ENCODE measurements at regions of chr11 and their contacts with region 1.

Region 1: DNA sequence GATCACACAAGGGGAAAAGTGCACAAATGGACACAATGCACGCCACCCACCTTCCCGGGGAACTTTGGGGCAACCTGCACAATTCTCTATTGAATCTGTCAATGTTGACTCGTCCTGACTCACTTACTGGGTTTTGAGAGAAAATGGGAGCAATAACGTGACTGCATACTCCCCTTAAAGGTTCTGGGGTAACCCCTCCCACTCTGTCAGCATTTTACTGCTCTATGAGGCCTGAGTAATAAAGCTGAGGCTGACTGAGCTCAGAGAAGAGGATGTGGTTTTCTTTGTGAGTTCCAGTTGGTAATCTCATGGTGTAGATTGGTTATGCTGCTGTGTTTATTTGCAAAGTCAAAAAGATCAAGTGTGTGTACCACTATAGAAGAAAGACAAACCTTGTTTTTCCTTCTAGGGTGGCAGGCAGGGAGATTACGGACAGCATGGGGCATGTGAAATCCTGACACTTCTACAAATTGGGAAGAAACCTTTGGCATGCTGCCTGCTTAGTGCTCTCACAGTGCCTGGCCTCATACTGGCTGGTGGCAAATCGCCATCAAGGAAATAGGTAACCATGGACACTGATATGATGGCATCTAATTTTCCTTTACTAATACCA is 16.1 kb upstream of the APOA1 start:
- DNase-seq: peak; percentile 70
- H3K4me3 Mint-ChIP-seq: peak overlapping the region; percentile 73
- H3K27ac Mint-ChIP-seq: peak overlapping the region; percentile 92
- H3K4me1 Mint-ChIP-seq: peaks cover 64% of the 10 kb centered on the region
- H3K27me3 Mint-ChIP-seq: no peaks in the 10 kb centered on the region

Region 2: DNA sequence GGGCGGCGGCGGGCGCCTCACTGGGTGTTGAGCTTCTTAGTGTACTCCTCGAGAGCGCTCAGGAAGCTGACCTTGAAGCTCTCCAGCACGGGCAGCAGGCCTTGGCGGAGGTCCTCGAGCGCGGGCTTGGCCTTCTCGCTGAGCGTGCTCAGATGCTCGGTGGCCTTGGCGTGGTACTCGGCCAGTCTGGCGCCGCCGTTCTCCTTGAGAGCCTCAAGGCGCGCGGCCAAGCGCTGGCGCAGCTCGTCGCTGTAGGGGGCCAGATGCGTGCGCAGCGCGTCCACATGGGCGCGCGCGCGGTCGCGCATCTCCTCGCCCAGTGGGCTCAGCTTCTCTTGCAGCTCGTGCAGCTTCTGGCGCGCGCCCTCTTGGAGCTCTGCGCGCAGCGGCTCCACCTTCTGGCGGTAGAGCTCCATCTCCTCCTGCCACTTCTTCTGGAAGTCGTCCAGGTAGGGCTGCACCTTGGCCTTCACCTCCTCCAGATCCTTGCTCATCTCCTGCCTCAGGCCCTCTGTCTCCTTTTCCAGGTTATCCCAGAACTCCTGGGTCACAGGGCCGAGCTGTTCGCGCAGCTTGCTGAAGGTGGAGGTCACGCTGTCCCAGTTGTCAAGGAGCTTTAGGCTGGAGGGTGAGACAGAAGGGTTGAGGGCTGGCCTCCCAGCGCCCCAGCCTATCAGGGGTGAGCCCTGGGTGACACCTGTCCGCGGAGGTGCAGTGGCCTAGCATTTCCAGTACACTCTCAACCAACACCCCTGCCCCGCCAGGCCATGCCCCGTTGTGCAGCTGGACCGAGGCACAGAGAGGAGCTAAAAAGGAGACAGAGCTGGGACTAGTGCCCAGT is 17.6 kb before region 1 on chr11:
- intact Hi-C with region 1: loop called (anchors 1 kb)
- DNase-seq: peak; percentile 73
- H3K4me3 Mint-ChIP-seq: peak overlapping the region; percentile 54
- H3K27ac Mint-ChIP-seq: no peak overlapping the region
- H3K4me1 Mint-ChIP-seq: peaks cover 5% of the 10 kb centered on the region
- H3K27me3 Mint-ChIP-seq: peaks cover 4% of the 10 kb centered on the region

Region 3: DNA sequence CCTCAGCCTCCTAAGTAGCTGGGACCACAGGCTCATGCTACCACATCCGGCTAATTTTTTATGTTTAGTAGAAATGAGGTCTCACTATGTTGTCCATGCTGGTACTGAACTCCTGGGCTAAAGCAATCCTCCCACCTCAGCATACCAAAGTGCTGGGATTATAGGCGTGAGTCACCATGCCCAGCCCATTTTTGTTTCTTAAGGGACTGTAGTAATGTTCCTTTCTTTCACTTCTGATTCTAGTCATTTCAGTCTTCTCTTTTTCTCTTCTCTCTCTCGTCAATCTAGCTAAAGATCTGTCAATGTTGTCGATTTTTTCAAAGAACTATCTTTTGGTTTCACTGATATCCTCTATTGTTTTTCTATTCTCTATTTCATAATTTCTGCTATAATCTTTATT is 94.8 kb after region 1 on chr11:
- intact Hi-C with region 1: loop called (anchors 1 kb)
- DNase-seq: peak; percentile 10
- H3K4me3 Mint-ChIP-seq: no peak overlapping the region
- H3K27ac Mint-ChIP-seq: peak overlapping the region; percentile 0
- H3K4me1 Mint-ChIP-seq: peaks cover 30% of the 10 kb centered on the region
- H3K27me3 Mint-ChIP-seq: no peaks in the 10 kb centered on the region

Region 4: GRCh38 chr11:117058761-117059261 is 205.2 kb after region 1 on chr11:
- intact Hi-C with region 1: loop called (anchors 1 kb)
- DNase-seq: no peak
- H3K4me3 Mint-ChIP-seq: no peak overlapping the region
- H3K27ac Mint-ChIP-seq: no peak overlapping the region
- H3K4me1 Mint-ChIP-seq: peaks cover 42% of the 10 kb centered on the region
- H3K27me3 Mint-ChIP-seq: no peaks in the 10 kb centered on the region

Region 5: DNA sequence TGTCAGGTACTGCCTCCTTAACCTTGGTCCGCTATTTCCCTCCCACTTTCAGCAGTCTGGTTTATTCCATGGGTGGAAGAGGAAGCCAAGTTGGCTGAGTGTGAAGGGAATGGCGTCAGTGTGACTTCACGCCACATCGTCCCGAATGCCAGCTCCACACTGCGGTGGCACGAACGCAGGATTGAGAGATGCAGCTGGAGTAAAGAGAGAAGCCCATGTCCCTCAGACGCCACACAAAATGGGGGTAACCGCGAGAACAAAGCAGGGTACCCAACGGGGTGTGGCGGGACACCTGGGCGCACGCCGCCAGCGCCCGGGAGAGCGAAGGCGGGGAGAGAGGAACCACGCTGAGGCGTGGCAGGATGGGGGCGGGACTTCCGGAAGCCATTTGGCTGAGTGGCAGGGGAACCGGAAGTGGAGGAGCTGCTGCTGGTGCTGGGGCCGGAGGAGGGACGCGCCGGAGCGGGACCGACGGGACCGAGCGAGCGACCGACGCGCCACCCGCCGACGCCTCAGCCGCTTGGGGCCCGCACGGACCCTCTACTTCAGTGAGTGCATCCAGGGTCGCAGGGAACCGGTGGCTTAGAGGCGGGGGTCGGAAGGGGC is 290.4 kb after region 1 on chr11 and contains the start of gene PAFAH1B2:
- intact Hi-C with region 1: loop called (anchors 1 kb)
- DNase-seq: peak; percentile 93
- H3K4me3 Mint-ChIP-seq: peak within 1 kb of the TSS; percentile 97
- H3K27ac Mint-ChIP-seq: peak within 1 kb of the TSS; percentile 90
- H3K4me1 Mint-ChIP-seq: peaks cover 29% of the 10 kb centered on the region
- H3K27me3 Mint-ChIP-seq: peaks cover 8% of the 10 kb centered on the region
- total RNA-seq, gene PAFAH1B2: 71.8 and 83.6 TPM in 2 replicates

Region 6: DNA sequence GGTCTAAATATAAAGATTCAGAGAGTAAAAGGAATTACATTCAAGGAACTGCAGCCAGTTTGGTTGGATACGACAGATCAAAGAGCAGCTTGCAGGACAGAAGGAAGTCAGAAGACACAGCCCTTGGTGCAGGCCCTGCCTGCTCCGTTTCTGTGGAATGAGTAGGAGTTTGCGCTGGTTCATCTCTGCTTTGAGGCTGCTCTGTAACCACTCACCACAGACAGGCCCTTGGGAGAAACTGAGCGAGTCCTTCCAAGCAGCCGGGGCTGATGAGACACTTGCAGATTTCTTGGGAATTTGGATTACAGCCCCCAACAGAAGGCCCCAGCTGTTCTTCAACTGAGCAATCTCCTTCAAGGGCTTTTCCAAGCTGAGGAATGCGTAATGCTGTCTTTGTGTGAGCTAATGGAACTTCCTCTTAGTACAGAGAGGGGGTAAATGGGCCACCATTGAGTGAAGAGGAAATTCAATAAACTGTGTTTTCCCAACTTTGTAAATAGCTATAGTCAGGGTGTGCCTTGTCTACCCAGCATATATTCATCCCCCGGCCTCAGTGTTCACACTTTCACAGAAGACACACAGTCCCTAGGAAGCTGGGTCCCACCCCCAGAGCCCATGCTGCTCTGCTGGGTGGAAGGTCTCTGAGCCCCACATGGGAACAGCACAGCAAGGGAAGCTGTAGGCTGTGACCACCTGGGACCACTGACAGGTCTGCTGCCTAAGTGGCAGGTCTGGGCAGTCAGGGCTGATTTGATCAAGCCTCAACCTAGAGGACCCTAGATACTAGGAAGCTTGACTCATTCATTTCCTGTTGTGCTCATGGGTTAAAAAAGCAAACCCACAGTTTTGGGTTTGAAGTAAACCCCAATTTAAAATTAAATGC is 1149.2 kb after region 1 on chr11:
- intact Hi-C with region 1: loop called (anchors 2 kb)
- DNase-seq: peak; percentile 50
- H3K4me3 Mint-ChIP-seq: peak overlapping the region; percentile 61
- H3K27ac Mint-ChIP-seq: peak overlapping the region; percentile 98
- H3K4me1 Mint-ChIP-seq: peaks cover 92% of the 10 kb centered on the region
- H3K27me3 Mint-ChIP-seq: no peaks in the 10 kb centered on the region

Measured in activated T-helper 1 cell treated with anti-CD3 and anti-CD28 coated beads, Interleukin-12 subunit alpha, Interleukin-12 subunit beta, Interleukin-2, Interleukin-4 antibody, amounts not matched to agents 30 ng/mL and 10 ng/mL and 1 ng/mL, durations not matched to agents 14 hours and 24 hours and 36 hours (primary cell).